GM13977 (cell line): ENCODE measurements at regions of chr12 and their contacts with region 1.

Region 1: DNA sequence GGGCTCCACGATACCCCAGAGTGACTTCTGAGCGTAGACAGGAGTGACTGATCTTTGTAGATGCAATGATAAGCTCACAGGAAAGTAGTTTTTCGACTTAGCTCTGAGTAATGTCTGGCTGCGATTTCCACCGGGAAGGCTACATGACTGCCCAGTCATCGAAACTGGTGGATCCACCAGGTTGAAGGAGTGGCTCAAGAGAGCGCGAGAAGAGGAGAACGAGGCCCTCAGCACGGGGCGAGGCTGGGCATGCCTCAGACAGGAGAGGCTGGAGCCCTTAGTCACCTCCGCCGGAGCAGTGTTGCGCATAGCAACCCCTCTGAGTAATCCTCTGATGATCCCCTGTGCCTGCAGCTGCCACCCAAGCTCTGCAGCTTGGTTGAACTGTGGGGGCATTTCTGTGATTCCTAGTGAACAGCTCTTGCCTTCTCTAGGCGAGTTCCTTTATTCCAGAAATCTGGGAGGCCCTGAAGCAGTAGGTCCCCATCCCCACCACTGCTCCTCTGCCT is 25.6 kb downstream of the ELK3 start:
- DNase-seq: no peak
- CTCF ChIP-seq: no peak

Region 2: GRCh38 chr12:95918194-95918993 is 301.4 kb before region 1 on chr12:
- in situ Hi-C with region 1: loop called (anchors 25 kb)
- DNase-seq: peak; percentile 62
- CTCF ChIP-seq: peak; percentile 75

Region 3: DNA sequence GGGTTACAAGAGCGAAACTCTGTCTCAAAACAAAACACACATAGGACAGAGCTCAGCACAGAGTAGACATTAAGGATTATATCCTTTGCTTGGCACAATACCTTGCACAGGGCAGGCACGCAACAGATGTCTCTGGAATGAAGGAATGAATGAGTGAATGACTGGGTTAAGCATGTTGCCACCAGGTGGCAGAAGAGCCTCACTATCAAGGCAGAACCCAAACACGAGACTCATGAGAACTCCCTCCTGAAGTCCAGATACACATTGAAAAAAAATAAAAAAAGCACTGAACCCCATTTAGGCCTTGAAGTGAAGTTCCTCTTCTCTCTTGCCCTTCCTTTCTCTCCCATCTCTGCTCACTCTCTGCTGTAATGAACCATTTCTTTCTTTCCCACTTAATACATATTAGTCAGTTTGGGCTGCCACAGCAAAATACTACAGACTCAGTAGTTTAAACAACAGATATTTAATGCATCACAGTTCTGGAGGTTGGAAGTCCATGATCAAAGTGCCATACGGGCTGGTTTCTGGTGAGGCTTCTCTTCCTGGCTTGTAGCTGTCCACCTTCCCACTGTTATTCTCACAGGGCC is 157.8 kb before region 1 on chr12:
- in situ Hi-C with region 1: loop called (anchors 10 kb)
- DNase-seq: peak; percentile 73
- CTCF ChIP-seq: peak; percentile 73

Region 4: GRCh38 chr12:96516472-96517430 is 297.0 kb after region 1 on chr12:
- in situ Hi-C with region 1: loop called (anchors 10 kb)
- DNase-seq: peak; percentile 54
- CTCF ChIP-seq: peak; percentile 78